PC-9 (cell line): ENCODE measurements at regions of chr17 and their contacts with region 1.

Region 1: DNA sequence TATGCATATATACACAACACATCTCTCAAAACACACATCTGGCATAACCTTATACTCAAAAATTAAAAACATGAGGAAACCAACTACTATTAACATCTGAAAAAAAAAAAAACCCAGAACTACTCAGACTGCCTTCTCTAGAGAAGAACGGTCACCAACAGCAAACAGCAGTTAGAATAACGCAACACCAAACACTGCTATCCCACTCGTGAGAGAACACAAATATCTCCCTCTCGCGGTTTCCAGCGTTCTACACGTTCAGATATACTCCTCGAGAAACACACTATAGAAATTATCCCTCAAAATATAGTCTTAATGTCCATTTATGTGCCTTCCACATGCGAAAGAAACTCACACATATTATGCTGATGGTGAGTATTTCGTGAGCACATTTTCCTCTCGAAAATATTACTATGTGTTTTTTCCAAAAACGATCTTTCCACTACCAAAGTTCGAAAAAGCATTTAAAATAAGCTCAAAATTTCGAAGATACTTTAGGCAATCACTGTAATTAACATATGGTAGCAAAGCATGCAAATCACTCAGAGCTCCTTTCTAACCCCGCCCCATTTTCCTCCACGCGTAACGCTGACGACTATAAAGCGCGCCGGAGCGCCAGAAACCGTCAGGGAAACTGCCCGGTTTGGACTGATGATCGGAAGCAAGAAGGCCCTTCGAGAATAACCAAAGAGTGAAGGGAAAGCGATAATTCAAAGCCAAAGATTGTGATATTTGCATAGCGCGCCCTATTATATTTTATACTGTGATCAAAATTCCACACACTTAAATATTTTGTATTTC is 60.1 kb downstream of the TEX14 start:
- DNase-seq: peak; percentile 92 to 99
- H3K4me3 ChIP-seq: peak overlapping the region; percentile 62
- H3K27ac ChIP-seq: peak overlapping the region; percentile 86
- H3K4me1 ChIP-seq: peaks cover 5% of the 10 kb centered on the region
- H3K27me3 ChIP-seq: no peaks in the 10 kb centered on the region
- CTCF ChIP-seq: peak; percentile 35; the same call in 1 of the 2 replicates

Region 2: DNA sequence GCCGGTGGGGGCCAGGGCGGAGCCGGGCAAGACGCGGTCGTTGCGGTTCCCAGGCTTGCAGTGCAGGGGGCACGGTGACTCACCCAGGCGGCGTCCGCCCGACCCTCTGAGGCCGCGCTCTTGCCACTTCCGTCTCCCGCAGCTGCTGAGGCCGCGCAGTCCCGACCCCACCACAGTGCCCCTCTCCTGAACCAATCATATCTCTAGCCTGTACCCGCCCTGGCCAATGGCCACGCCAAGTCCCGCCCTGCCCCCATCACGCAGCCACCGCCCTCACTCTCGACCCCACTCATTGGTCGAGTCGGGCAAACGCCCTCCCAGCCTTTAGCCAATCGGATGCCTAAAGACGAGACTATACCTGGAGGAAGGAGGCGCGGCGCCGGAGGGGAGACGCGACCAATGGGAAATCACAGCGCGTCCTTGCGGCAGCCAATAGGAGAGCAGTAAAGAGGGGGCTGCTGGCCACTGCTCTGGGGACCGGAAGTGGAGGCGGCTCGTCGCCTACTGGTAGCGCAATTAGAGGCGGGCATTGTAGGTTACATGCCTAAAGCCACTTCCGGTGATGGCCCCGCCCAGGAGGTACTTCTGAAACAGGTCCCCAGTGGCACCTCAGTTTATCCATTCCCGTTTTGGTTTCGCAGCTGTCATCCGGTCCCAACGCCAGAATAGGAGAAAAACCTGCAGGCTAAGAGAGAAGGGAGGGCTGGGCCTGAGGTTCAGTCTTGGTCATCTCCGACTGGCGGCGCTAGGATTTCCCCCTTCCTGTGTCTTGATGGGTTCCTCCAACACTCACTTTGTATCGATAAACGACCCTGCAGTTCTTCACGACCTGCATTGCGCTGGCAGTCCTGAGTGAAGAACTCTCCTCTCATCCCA is 113.8 kb before region 1 on chr17:
- CTCF ChIA-PET with region 1: no interaction called
- POLR2A ChIA-PET with region 1: interaction called, 11 read pairs
- intact Hi-C with region 1: loop called (anchors 1 kb)
- DNase-seq: peak; percentile 99 to 100
- H3K4me3 ChIP-seq: peak overlapping the region; percentile 80
- H3K27ac ChIP-seq: peak overlapping the region; percentile 84
- H3K4me1 ChIP-seq: peaks cover 23% of the 10 kb centered on the region
- H3K27me3 ChIP-seq: no peaks in the 10 kb centered on the region
- CTCF ChIP-seq: no peak

Region 3: DNA sequence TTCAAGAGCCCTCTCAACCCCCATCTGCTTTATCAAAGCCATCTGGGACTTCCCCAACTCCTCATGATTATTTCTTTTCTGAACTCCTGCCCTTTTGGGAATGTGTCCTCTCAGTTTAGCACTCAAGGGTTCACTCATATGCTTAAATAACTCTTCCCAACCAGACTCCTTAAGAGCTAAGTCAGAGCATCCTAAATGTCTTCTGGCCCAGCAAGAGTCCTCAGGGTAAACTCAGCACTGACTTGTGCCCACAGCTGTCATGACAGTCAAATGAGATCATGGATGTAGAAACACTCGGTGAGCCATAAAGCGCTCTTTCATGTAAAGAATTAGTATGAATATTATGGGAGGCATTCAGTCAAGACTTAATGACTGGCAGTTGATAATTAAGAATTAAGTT is 25.7 kb before region 1 on chr17:
- CTCF ChIA-PET with region 1: no interaction called
- POLR2A ChIA-PET with region 1: no interaction called
- intact Hi-C with region 1: no loop called
- DNase-seq: no peak
- H3K4me3 ChIP-seq: no peak overlapping the region
- H3K27ac ChIP-seq: no peak overlapping the region
- H3K4me1 ChIP-seq: no peaks in the 10 kb centered on the region
- H3K27me3 ChIP-seq: no peaks in the 10 kb centered on the region
- CTCF ChIP-seq: no peak

Region 4: GRCh38 chr17:58615768-58616659 is 15.7 kb before region 1 on chr17:
- CTCF ChIA-PET with region 1: no interaction called
- POLR2A ChIA-PET with region 1: no interaction called
- intact Hi-C with region 1: no loop called
- DNase-seq: no peak
- H3K4me3 ChIP-seq: no peak overlapping the region
- H3K27ac ChIP-seq: no peak overlapping the region
- H3K4me1 ChIP-seq: no peaks in the 10 kb centered on the region
- H3K27me3 ChIP-seq: no peaks in the 10 kb centered on the region
- CTCF ChIP-seq: no peak

Region 5: DNA sequence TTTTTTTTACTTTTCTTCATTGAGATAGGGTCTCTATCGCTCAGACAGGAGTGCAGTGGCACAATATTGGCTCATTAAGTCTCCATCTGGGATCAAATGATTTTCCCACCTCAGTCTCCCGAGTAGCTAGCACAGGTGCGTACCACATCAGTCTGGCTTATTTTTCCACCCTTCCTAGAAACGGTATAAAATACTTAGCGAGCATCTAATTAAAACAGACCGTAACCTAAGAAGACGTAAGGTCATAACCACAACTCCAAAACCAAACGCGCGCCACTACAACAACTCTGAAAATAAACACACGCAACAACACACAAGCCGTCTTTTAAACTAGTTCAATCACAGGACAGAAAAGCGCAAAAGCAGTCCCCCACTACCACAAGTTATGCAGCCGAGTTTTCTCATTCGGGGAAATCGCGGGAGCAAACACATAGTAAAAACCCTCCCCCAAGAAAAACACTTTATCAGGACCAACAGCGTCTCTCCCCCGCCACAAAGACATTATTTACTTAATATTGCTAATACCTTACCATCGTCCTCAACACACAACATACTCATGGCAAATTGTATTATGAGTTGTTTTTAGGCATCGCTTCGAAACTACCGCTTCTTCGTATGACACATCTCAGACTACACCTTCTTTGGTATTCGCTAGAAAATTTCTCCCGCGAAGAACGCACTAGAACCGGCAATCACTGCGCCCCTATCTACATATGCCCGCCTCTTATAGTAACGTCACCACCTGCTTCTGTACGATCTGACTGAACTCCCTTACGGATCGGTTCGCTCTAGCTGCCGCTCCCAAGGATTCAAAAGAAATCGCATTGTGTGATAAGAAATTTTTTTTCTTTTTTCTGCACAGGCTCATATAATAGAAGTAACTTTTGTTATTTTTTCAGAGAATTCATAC is 27.3 kb after region 1 on chr17:
- CTCF ChIA-PET with region 1: no interaction called
- POLR2A ChIA-PET with region 1: interaction called, 27 read pairs
- intact Hi-C with region 1: loop called (anchors 1 kb)
- DNase-seq: peak; percentile 80 to 99
- H3K4me3 ChIP-seq: peak overlapping the region; percentile 61
- H3K27ac ChIP-seq: peak overlapping the region; percentile 89
- H3K4me1 ChIP-seq: peaks cover 14% of the 10 kb centered on the region
- H3K27me3 ChIP-seq: no peaks in the 10 kb centered on the region
- CTCF ChIP-seq: no peak

Region 6: GRCh38 chr17:58679263-58680037 is 47.7 kb after region 1 on chr17:
- CTCF ChIA-PET with region 1: no interaction called
- POLR2A ChIA-PET with region 1: interaction called, 9 read pairs
- intact Hi-C with region 1: loop called (anchors 1 kb)
- DNase-seq: peak; percentile 45 to 99
- H3K4me3 ChIP-seq: peak overlapping the region; percentile 25; the same call in 1 of the 2 replicates
- H3K27ac ChIP-seq: peak overlapping the region; percentile 48
- H3K4me1 ChIP-seq: peaks cover 22% of the 10 kb centered on the region
- H3K27me3 ChIP-seq: no peaks in the 10 kb centered on the region
- CTCF ChIP-seq: no peak; the same call in 1 of the 2 replicates

Region 7: DNA sequence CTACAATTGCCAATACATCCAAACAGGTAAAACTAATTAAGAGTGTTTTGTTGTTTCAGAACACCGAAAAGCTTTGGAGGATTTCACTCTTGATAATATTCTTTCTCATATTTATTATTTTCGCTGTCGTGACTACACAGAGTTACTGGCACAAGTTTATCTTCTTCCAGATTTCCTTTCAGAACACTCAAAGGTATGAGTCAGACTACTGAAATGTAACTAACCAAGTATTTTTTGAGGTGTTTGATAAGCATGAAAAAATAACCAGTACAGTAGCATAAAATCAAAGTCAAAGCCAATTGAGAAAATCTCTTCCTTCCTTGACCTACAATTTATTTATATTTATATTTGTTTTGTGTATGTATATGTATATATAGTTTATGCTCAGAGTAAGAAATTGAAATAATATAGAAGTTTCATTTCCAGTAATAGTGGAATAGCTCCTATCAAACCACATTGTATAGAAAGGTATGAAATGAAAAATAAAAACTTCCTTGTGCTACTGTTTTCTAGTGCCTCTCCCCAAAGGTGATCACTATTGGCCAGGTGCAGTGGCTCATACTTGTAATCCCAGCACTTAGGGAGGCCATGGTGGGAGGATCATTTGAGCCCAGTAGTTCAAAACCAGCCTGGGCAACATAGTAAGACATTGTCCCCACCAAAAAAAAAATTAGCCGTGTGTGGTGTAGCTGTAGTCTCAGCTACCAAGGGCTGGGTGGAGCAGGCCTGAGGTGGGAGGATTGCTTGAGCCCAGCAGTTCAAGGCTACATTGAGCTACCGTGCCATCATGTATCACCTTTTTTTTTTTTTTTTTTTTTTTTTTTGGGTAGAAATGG is 71.6 kb after region 1 on chr17:
- CTCF ChIA-PET with region 1: no interaction called
- POLR2A ChIA-PET with region 1: interaction called, 17 read pairs
- intact Hi-C with region 1: no loop called
- DNase-seq: peak in 1 of 2 experiments; percentile 84
- H3K4me3 ChIP-seq: no peak overlapping the region
- H3K27ac ChIP-seq: peak overlapping the region; percentile 59
- H3K4me1 ChIP-seq: peaks cover 26% of the 10 kb centered on the region
- H3K27me3 ChIP-seq: no peaks in the 10 kb centered on the region
- CTCF ChIP-seq: no peak

Region 8: GRCh38 chr17:58947824-58948223 is 316.1 kb after region 1 on chr17:
- CTCF ChIA-PET with region 1: no interaction called
- POLR2A ChIA-PET with region 1: no interaction called
- intact Hi-C with region 1: no loop called
- DNase-seq: no peak
- H3K4me3 ChIP-seq: no peak overlapping the region
- H3K27ac ChIP-seq: no peak overlapping the region
- H3K4me1 ChIP-seq: no peaks in the 10 kb centered on the region
- H3K27me3 ChIP-seq: no peaks in the 10 kb centered on the region
- CTCF ChIP-seq: no peak

Region 9: DNA sequence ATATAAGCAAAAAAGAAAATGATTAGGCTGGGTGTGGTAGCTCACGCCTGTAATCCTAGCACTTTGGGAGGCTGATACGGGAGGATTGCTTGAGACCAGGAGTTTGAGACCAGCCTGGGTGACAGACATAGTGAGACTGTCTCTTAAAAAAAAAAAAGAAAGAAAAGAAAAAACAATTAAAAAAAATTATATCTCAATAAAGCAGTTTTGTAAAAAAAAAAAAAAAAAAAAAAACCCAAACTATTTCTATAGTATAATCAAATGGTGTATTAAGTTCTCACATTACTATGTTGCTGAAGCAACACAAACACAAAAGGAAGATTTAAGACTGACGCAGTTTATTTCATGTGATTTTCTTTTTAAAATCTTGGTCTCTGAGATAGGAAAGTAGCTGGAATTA is 334.5 kb after region 1 on chr17:
- CTCF ChIA-PET with region 1: no interaction called
- POLR2A ChIA-PET with region 1: interaction called, 11 read pairs
- intact Hi-C with region 1: no loop called
- DNase-seq: no peak
- H3K4me3 ChIP-seq: no peak overlapping the region
- H3K27ac ChIP-seq: no peak overlapping the region
- H3K4me1 ChIP-seq: no peaks in the 10 kb centered on the region
- H3K27me3 ChIP-seq: no peaks in the 10 kb centered on the region
- CTCF ChIP-seq: no peak